ENCODE measurements at regions of chr6 and their contacts with region 1.

Region 1: GRCh38 chr6:143060354-143060805 is 309 bp upstream of the AIG1 start:
- DNase-seq: peak; percentile 75 to 96
- H3K4me3 ChIP-seq: peak overlapping the region; percentile 84 to 89
- H3K27ac ChIP-seq: peak overlapping the region; percentile 89 to 97
- H3K4me1 ChIP-seq: peaks cover 4 to 7% of the 10 kb centered on the region in 2 donors
- H3K27me3 ChIP-seq: no peaks in the 10 kb centered on the region
- CTCF ChIP-seq: peak in 1 of 3 experiments; percentile 6

Region 2: GRCh38 chr6:143136647-143137046 is 76.3 kb after region 1 on chr6:
- intact Hi-C with region 1: loop called (anchors 1 kb)
- DNase-seq: no peak
- H3K4me3 ChIP-seq: no peak overlapping the region
- H3K27ac ChIP-seq: peak overlapping the region; percentile 2 to 41
- H3K4me1 ChIP-seq: peaks cover 3 to 14% of the 10 kb centered on the region in 2 donors
- H3K27me3 ChIP-seq: no peaks in the 10 kb centered on the region
- CTCF ChIP-seq: no peak

Region 3: GRCh38 chr6:143634493-143634892 is 574.1 kb after region 1 on chr6:
- intact Hi-C with region 1: no loop called
- DNase-seq: no peak
- H3K4me3 ChIP-seq: no peak overlapping the region
- H3K27ac ChIP-seq: no peak overlapping the region
- H3K4me1 ChIP-seq: no peaks in the 10 kb centered on the region
- H3K27me3 ChIP-seq: no peaks in the 10 kb centered on the region
- CTCF ChIP-seq: no peak